Posterior vena cava (tissue), 2 donors: ENCODE measurements at regions of chr2 and their contacts with region 1.

Region 1: DNA sequence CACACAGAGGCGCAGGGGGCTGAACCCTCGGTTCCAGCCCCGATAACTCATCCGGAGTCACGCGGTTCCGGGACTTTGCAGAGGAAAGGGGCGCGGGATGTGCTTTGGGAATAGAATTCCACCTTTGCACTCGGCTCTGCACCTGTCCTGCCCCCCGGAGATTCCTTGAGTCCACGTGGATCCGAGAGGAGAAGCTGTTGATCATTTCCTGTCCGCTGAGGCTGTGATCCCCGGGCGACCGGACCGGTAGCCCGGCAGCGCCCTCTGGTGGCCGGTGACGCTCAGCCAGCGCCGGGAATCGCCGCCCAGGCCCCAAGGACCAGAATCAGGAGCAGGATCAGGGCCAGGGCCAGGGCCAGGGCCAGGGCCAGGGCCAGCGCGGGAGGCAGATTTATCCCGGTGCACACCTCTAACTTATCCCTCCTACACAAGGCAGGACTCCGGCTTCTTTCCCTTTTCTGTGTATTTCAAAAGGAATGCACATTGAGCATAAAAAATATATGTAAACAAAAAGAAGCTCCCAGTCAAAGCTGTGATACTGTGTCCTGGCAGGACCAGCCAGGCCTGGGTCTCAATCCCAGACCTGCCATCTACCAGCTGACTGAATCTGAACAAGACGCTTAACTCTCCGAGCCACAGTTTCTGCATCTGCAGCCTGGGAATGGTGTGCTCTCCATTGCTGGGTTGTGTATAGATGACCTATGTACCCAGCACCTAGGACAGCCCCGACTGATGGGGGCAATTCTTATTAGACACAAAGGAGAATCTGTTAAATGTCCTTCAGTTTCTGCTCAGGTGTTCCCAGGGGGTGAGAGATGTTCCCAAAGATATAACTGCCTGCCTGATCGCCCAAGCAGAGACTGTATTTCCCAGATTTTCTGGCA is 8.5 kb upstream of the SPATA3 start:
- DNase-seq: peak; percentile 95

Region 2: DNA sequence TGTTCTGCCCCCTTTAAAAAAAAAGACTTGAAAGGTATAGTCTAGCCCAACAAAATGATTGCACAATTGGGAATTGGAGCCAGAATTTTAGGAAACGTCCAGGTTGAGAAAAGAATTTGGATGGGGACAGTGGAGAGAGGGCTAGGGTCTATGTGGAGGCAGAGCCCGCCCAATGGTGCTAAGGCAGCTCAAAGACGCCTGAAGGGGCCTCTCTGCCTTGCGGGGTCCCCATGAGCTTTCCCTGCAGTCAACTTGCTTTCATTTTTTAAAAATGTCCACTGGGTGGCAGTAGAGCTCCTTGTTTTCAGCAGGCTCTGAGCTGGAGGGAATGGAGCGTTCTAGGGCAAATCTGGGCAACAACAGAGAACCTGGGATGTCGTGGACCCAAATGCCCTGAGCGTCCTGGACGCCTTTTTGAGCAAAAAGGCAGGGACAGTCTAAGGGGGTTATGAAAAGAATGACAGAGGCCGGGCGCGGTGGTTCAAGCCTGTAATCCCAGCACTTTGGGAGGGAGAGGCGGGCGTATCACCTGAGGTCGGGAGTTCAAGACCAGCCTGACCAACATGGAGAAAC is 162.9 kb before region 1 on chr2:
- intact Hi-C with region 1: loop called (anchors 5 to 10 kb)
- DNase-seq: no peak

Region 3: GRCh38 chr2:230902180-230902899 is 85.0 kb before region 1 on chr2:
- intact Hi-C with region 1: loop called (anchors 5 to 10 kb)
- DNase-seq: peak; percentile 84

Region 4: GRCh38 chr2:230908595-230909191 is 78.7 kb before region 1 on chr2:
- intact Hi-C with region 1: loop called (anchors 5 to 10 kb)
- DNase-seq: peak; percentile 61